ENCODE measurements at regions of chr3 and their contacts with region 1.

Region 1: DNA sequence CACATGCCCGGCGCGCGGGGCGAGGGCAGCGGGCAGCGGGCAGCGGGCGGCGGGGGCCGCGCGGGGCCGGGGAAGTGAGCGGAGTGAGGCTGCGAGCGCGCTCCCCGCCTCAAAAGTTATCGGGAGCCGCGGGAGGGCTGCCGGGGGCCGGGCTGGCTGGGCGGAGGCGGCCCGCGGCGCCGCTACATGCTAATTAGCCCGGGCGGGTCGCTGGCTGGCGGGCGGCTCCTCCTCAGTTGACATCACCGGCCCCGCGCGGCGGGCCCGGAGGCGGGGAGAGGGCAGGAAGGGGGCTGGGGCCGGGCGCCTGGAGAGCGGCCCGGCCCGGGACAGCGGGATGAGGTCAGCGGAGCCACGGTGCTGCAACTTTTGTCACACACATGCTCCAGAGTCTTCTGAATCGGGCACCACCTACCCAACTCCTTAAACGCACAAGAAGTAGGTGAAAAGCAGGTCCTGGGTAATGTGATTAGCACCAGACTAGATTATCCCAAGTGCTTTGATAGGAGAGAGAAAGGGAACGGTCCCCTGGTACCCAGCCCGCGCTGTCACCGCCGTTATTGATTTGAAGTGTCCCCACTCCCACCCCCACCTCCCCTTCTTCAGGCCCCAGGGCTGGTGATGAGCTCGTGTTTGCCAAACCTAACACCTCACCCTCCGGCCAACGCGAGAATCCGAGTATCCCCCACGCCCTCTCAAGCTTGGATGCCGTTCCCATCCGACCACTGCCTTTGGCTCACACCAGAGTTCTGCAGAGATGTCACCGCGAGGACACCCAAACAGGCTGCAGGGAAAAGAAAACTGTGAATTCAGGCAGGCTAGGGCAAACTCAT is at the start of gene HEG1:
- DNase-seq: peak; percentile 73
- H3K4me3 ChIP-seq: peak within 1 kb of the TSS; percentile 59 to 79 (median 77)
- H3K27ac ChIP-seq: peak within 1 kb of the TSS; percentile 60
- H3K4me1 ChIP-seq: peaks cover 58% of the 10 kb centered on the region
- H3K27me3 ChIP-seq: no peaks in the 10 kb centered on the region
- CTCF ChIP-seq: no peak
- total RNA-seq, gene HEG1: 24.8 to 33.8 TPM

Region 2: DNA sequence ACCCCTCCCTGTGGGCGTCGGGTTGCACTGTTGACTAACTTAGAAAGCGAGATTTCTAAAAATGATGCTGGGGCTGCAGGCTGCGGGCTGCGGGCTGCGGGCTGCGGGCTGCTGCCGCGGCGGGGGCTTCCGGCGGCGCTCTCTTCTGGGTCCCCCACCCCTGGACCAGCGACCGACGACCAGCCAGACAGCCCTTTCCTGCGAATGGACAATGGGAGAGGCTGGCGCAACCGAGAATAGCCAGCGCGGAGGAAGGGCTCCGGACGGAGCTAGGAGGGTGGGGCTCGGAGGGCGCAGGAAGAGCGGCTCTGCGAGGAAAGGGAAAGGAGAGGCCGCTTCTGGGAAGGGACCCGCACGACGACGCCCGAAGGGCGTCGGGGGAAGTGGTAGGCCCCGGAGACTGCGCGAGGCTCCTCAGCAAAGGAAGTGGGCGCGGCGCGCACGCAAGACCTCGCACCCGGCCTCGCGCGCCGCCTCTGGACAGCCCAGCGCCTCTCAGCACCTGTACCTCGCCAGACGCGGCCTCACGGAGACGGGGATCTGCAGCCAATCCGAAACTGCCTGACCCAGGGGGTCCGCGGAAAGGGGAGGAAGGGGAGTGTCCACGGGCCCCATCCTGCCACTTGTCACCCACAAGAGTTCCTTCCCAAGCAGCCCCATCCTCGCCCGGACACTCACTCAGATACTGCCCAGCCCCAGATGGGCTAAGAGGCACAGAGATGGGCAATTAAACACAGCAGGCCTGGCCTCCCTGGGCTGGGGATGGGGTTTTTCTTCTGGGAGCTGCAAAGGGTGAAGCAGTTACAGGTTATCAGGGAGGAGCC is 85.7 kb after region 1 on chr3:
- CTCF ChIA-PET with region 1: no interaction called
- dilution Hi-C with region 1: loop called (anchors 5 kb)
- in situ Hi-C with region 1: no loop called
- intact Hi-C with region 1: no loop called
- DNase-seq: no peak
- H3K4me3 ChIP-seq: no peak overlapping the region
- H3K27ac ChIP-seq: no peak overlapping the region
- H3K4me1 ChIP-seq: peaks cover 27% of the 10 kb centered on the region
- H3K27me3 ChIP-seq: no peaks in the 10 kb centered on the region
- CTCF ChIP-seq: no peak

Region 3: DNA sequence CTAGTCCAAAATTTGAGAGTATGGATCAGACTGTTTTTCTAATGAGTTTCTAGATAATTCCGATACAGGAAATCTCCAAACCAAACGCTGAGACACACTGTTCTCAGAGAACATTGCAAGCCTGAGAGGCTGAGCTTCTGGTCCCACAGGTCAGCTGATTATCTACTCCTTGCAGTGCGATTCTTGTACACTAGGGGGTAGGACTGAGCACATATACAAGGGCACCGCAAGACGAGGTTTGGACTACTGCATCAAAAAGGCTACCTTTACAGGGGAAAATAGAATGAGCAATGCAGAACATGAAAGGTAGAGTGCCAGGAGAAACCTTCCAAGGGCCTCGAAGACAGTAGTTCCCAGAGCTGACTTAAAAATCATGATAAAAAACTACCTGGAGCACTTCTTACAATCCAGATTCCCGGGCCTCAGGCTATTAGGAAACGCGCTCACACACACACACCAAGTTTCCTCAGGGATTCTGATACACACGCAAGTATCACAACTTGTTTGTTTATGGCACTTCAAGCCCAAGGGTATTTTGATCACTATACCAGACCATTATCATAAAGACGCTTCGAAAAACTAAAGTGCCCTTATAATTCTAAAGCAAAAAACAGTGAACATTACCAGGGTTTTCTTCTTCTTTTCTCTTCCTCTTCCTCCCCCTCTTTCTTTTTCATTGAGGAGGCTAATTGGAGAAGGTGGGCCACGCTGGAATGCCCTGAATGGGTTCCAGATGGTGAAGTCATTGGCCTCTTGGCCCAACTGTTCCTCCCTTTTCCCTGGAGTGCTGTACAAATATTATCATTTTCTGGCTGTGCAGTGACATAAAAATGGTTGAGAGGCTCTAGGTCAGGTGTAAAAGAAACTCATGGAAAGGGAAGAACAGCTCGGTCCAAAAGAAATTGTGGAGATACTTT is 94.7 kb after region 1 on chr3:
- CTCF ChIA-PET with region 1: no interaction called
- dilution Hi-C with region 1: no loop called
- in situ Hi-C with region 1: no loop called
- intact Hi-C with region 1: loop called (anchors 5 kb)
- DNase-seq: no peak
- H3K4me3 ChIP-seq: no peak overlapping the region
- H3K27ac ChIP-seq: no peak overlapping the region
- H3K4me1 ChIP-seq: no peaks in the 10 kb centered on the region
- H3K27me3 ChIP-seq: no peaks in the 10 kb centered on the region
- CTCF ChIP-seq: peak; percentile 45 to 67

Measured in mammary epithelial cell (primary cell).